ENCODE measurements at regions of chr19 and their contacts with region 1.

Region 1: GRCh38 chr19:35066691-35067563 is 25.4 kb downstream of the HPN start:
- DNase-seq: peak; percentile 91 to 96
- ATAC-seq: peak; percentile 86
- H3K4me3 ChIP-seq: no peak overlapping the region
- H3K27ac ChIP-seq: no peak overlapping the region
- H3K4me1 ChIP-seq: no peaks in the 10 kb centered on the region
- H3K27me3 ChIP-seq: no peaks in the 10 kb centered on the region

Region 2: GRCh38 chr19:35030257-35031071 is 36.5 kb before region 1 on chr19 and contains the start of gene SCN1B:
- intact Hi-C with region 1: no loop called
- DNase-seq: peak; percentile 81 to 93
- ATAC-seq: peak; percentile 79
- H3K4me3 ChIP-seq: peak within 1 kb of the TSS; percentile 71 to 87
- H3K27ac ChIP-seq: no peak within 1 kb of the TSS
- H3K4me1 ChIP-seq: no peaks in the 10 kb centered on the region
- H3K27me3 ChIP-seq: no peaks in the 10 kb centered on the region
- total RNA-seq, gene SCN1B: 11.9 to 21.4 TPM

Region 3: GRCh38 chr19:35079826-35080225 is 12.9 kb after region 1 on chr19:
- intact Hi-C with region 1: no loop called
- DNase-seq: no peak
- ATAC-seq: no peak
- H3K4me3 ChIP-seq: no peak overlapping the region
- H3K27ac ChIP-seq: no peak overlapping the region
- H3K4me1 ChIP-seq: no peaks in the 10 kb centered on the region
- H3K27me3 ChIP-seq: no peaks in the 10 kb centered on the region

Region 4: DNA sequence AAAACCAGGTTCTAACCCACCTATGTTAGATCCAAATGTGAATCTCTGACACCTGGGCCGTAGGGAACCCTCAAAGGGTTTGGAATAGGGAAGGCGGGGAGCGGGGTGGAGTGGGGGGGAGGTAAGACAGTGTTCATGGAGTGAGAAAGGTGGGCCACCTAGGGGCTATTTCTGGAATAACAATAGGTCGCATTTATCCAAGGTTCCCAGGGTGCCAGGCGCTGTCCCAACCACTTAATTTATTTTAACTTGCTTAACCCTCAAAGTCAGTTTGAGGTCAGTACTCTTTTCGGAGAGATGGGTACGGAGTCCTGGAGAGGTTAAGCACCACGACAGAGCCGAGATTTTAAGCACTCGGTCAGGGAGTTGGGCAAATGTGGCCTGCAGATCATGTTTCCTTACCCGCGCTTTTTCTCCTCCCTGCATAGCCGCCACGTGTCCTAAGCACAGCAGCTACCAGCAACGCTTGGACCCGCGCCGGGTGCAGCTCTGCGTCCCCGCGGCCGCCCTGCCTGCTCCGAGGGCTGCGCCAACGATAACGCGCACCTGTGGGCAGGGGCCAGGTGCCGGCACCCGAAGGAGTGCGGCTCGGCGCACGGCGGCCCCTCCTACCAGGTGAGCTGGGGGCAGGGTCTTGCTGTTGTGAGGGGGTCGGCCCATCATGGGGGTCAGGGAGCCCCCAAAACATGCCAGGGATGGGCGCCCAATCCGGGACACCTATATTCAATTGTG is 23.7 kb after region 1 on chr19:
- intact Hi-C with region 1: no loop called
- DNase-seq: no peak
- ATAC-seq: peak; percentile 65
- H3K4me3 ChIP-seq: no peak overlapping the region
- H3K27ac ChIP-seq: no peak overlapping the region
- H3K4me1 ChIP-seq: no peaks in the 10 kb centered on the region
- H3K27me3 ChIP-seq: no peaks in the 10 kb centered on the region

Region 5: DNA sequence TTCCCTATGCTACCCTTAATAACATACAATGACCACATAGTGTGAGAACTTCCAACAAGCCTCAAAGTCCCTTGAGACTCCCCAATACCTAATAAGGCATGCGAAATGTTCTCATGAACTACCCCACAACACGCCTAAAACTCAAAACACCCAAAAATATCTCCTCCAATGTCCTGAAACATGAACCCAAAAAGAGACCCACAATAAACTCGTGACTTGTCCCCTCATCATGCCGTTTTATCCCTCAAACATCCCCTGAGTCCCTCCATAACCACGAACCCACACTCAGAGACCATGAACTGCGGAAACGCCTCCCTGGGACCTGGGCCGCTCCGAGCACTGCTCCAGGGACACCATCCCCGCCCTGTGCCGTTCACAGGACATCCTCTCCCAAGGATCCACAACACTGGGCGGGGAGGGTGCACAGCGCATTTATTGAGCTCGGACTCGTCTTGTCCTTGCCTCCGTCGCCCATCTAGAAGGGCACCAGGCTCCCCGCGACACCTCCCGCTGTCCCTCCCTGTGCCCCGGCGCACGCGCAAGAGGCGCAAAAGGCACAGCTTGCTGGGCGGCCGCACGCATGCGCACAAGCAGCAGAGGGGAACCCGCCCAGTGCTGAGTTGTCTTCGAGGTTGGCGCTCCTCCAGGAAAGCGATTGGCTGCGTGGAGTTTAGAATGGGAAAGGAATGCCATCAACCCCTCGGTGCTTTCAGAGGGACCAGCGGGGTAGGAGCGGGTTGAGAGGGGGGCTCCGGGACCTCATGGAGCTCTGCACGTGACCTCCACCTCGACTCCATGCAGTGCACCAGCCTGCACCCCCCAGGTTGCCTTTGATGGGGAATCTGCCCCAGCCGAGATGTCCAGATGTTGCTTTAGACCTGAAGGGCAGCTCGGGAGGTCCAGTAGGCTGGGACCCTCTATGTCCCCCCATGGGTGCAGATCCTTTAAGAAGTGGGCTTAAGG is 57.5 kb after region 1 on chr19:
- intact Hi-C with region 1: no loop called
- DNase-seq: peak; percentile 97 to 98
- ATAC-seq: peak; percentile 95
- H3K4me3 ChIP-seq: peak overlapping the region; percentile 7 to 33
- H3K27ac ChIP-seq: peak overlapping the region in 1 of 2 donors; percentile 87
- H3K4me1 ChIP-seq: no peaks in the 10 kb centered on the region
- H3K27me3 ChIP-seq: no peaks in the 10 kb centered on the region

Region 6: GRCh38 chr19:35135389-35135909 is 68.5 kb after region 1 on chr19:
- intact Hi-C with region 1: loop called (anchors 5 kb)
- DNase-seq: peak; percentile 87 to 95
- ATAC-seq: peak; percentile 86
- H3K4me3 ChIP-seq: no peak overlapping the region
- H3K27ac ChIP-seq: no peak overlapping the region
- H3K4me1 ChIP-seq: peaks cover 0 to 4% of the 10 kb centered on the region in 2 donors
- H3K27me3 ChIP-seq: no peaks in the 10 kb centered on the region

Region 7: GRCh38 chr19:35140962-35141637 is 74.2 kb after region 1 on chr19:
- intact Hi-C with region 1: loop called (anchors 5 kb)
- DNase-seq: peak; percentile 96 to 99
- ATAC-seq: peak; percentile 87
- H3K4me3 ChIP-seq: no peak overlapping the region
- H3K27ac ChIP-seq: peak overlapping the region in 1 of 2 donors; percentile 26
- H3K4me1 ChIP-seq: peaks cover 0 to 4% of the 10 kb centered on the region in 2 donors
- H3K27me3 ChIP-seq: no peaks in the 10 kb centered on the region

Region 8: DNA sequence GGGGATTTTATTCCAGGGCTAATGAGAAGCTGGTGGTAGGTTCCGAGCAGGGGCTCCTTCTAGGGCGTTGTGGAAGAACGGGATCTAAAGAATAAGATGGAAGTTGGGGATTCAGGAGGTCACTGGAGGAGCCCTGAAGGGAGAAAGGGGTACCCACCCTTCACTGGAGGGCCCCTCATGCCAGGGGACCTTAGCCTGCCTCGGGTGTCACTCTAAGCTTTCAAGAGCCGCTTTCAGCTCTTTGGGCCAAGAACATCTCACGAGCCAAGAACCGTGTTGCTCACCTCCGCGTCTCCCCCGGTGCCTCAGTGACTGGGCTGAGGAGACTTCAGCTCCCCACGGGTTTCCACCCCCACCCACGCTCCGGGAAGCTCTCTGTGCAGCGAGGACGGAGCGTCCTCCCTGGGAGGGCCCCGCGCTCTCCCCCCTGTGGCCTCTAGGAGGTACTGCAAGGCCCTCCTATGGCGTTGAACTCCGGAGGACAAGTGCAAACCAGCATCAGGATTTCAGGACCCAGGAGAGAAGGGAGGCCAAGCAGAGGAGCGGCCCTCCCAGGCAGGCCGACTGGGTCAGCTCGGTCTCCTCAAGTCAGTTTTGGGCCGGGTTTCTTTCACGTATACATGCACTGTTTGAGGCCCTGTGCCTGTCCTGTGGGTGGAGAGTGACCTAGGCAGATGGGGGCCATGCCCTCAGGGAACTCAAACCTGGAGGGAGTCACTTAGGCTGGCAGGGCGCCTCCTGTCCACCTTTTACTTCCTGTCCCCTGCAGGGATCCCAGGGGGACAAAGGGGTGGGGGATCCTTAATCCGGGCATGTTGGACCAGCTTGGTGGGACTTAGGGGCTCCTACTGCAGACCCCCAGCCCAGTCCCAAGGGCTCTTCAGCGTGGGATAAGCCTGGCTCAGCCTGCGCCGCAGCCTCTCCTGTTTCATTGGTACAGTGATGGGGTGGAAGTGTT is 428.5 kb after region 1 on chr19:
- intact Hi-C with region 1: loop called in 1 of 2 experiments (anchors 10 kb)
- DNase-seq: peak; percentile 72 to 88
- ATAC-seq: peak; percentile 91
- H3K4me3 ChIP-seq: no peak overlapping the region
- H3K27ac ChIP-seq: no peak overlapping the region
- H3K4me1 ChIP-seq: no peaks in the 10 kb centered on the region
- H3K27me3 ChIP-seq: no peaks in the 10 kb centered on the region